PC-3 (cell line): ENCODE measurements at regions of chr1 and their contacts with region 1.

Region 1: DNA sequence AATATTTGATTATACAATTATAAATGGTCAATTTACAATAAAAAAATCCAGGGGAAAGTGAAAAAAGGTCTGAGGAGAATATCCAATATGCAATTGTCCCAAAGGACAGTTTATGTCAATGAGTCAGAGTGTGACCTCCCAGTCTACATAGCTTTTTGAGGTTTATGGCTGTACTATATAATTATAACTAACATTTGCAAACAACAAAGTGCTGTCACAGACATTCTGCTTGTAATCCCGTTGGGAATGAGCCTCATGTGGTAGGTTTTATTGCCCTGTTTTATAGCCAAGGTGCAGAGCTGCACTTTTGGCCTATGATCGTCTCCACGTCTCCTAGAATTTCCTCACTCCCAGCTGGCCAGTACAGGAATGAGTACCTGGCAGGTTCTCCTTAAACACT is 103.8 kb downstream of the ADSS2 start:
- DNase-seq: peak; percentile 87
- ATAC-seq: peak; percentile 89
- H3K4me3 ChIP-seq: no peak overlapping the region
- H3K27ac ChIP-seq: peak overlapping the region; percentile 70
- H3K4me1 ChIP-seq: peaks cover 36% of the 10 kb centered on the region
- H3K27me3 ChIP-seq: no peaks in the 10 kb centered on the region
- CTCF ChIP-seq: no peak

Region 2: DNA sequence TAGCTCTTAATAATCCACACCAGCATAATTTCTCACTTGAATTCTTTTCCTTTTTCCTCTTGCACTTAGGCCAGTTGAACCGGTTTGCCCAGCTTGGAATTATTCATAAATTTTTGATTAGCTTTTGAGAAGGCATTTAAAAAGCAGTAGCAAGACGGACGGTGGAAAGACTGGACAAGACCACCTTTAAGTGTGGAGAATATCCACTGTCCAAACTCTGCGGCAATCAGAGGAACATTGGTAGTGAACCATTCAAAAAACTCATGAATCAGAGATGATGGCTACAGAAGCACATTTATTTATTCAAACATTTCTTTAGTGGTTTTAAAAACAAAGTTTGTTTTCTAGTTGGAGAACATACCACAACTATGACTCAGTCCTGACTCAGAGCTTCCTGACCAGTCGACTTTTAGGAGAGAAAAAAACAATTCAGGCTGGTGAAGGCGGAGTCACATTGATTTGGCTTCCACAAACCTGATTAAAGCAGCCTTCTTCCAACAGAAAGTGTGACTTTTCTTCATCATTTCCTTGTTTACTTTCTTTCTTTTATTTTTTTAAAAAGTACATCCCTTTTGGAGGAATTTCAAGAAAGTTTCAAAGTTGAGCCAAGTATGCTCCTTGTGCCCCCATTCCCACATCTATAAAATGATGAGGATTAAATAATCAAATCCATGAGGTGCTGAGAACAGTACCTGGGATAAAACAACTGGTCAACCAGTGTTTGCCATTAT is 25.0 kb before region 1 on chr1:
- CTCF ChIA-PET with region 1: no interaction called
- POLR2A ChIA-PET with region 1: no interaction called
- intact Hi-C with region 1: loop called (anchors 1 kb)
- DNase-seq: peak; percentile 99
- ATAC-seq: peak; percentile 92
- H3K4me3 ChIP-seq: peak overlapping the region; percentile 52
- H3K27ac ChIP-seq: peak overlapping the region; percentile 87
- H3K4me1 ChIP-seq: peaks cover 38% of the 10 kb centered on the region
- H3K27me3 ChIP-seq: no peaks in the 10 kb centered on the region
- CTCF ChIP-seq: no peak